Endothelial cell of umbilical vein (primary cell): ENCODE measurements at regions of chr6 and their contacts with region 1.

Region 1: DNA sequence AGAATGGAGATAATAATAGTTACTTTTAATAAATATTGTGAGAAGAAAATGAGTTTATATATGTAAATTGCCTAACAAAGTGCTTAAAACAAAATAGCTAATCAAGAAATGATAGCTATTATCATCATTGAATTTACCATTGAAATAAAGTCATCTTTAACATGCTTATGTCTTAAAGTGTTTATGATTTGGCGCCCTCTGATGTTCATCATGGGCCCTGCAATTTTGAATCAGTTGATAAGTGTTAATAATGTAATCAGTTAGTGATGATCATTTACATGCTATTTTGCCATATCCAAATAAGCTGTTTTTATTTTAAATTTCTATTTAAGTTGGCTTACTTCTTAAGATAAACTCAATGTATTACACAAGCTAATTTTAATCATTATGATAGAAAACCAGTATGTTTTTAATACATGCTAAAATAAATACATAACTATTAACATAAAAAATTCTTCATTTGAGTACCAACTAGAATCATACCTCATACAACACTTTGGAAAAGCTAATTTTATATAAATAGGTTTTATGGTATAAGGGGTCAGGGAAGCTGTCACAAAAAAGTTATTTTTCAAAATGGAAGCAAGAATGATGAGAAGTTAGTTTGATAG is 39.2 kb upstream of the TPD52L1 start:
- DNase-seq: peak; percentile 69
- H3K4me3 ChIP-seq: no peak overlapping the region
- H3K27ac ChIP-seq: no peak overlapping the region
- H3K4me1 ChIP-seq: no peaks in the 10 kb centered on the region
- H3K27me3 ChIP-seq: no peaks in the 10 kb centered on the region
- CTCF ChIP-seq: peak; percentile 49 to 50
- POLR2A ChIP-seq: no peak

Region 2: DNA sequence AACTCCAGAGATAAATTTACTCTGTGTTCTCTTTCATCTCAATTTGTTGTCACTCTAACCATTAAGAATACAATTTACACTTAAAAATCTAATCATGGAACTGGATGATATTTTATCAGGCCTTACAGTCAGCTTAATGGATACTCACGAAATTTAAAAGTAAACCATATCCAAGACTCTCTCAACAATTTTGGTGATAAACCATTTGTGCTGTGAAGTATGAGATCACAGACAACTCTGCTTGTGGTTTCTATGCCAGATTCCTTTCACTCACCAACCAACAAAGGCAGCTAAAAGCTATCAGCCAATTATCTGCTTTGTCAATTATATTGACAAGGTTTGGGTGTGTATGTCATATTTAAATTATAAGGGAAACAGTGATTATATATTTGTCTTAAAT is 1633.4 kb before region 1 on chr6:
- CTCF ChIA-PET with region 1: no interaction called
- POLR2A ChIA-PET with region 1: no interaction called
- dilution Hi-C with region 1: no loop called
- intact Hi-C with region 1: no loop called
- DNase-seq: no peak
- H3K4me3 ChIP-seq: no peak overlapping the region
- H3K27ac ChIP-seq: no peak overlapping the region
- H3K4me1 ChIP-seq: no peaks in the 10 kb centered on the region
- H3K27me3 ChIP-seq: no peaks in the 10 kb centered on the region
- CTCF ChIP-seq: no peak
- POLR2A ChIP-seq: no peak

Region 3: GRCh38 chr6:124882580-124883393 is 231.6 kb before region 1 on chr6:
- CTCF ChIA-PET with region 1: interaction called, 28 read pairs
- POLR2A ChIA-PET with region 1: no interaction called
- dilution Hi-C with region 1: no loop called
- intact Hi-C with region 1: no loop called
- DNase-seq: peak; percentile 73
- H3K4me3 ChIP-seq: peak overlapping the region in 1 of 3 experiments; percentile 6
- H3K27ac ChIP-seq: no peak overlapping the region
- H3K4me1 ChIP-seq: peaks cover 20% of the 10 kb centered on the region
- H3K27me3 ChIP-seq: no peaks in the 10 kb centered on the region
- CTCF ChIP-seq: no peak
- POLR2A ChIP-seq: no peak

Region 4: GRCh38 chr6:124888581-124889371 is 225.6 kb before region 1 on chr6:
- CTCF ChIA-PET with region 1: interaction called, 23 read pairs
- POLR2A ChIA-PET with region 1: no interaction called
- dilution Hi-C with region 1: no loop called
- intact Hi-C with region 1: no loop called
- DNase-seq: no peak
- H3K4me3 ChIP-seq: no peak overlapping the region
- H3K27ac ChIP-seq: no peak overlapping the region
- H3K4me1 ChIP-seq: no peaks in the 10 kb centered on the region
- H3K27me3 ChIP-seq: no peaks in the 10 kb centered on the region
- CTCF ChIP-seq: no peak
- POLR2A ChIP-seq: no peak

Region 5: GRCh38 chr6:124961777-124962611 is 152.4 kb before region 1 on chr6 and contains the start of gene RNF217:
- CTCF ChIA-PET with region 1: interaction called, 36 read pairs
- POLR2A ChIA-PET with region 1: no interaction called
- dilution Hi-C with region 1: no loop called
- intact Hi-C with region 1: loop called (anchors 1 kb)
- DNase-seq: peak; percentile 75
- H3K4me3 ChIP-seq: peak within 1 kb of the TSS; percentile 75 to 95 (median 93)
- H3K27ac ChIP-seq: peak within 1 kb of the TSS; percentile 69
- H3K4me1 ChIP-seq: peaks cover 40% of the 10 kb centered on the region
- H3K27me3 ChIP-seq: no peaks in the 10 kb centered on the region
- CTCF ChIP-seq: no peak
- POLR2A ChIP-seq: no peak
- total RNA-seq, gene RNF217: 32.5 and 33.1 TPM in 2 replicates

Region 6: GRCh38 chr6:124977067-124977908 is 137.1 kb before region 1 on chr6:
- CTCF ChIA-PET with region 1: interaction called, 10 read pairs
- POLR2A ChIA-PET with region 1: no interaction called
- dilution Hi-C with region 1: no loop called
- intact Hi-C with region 1: no loop called
- DNase-seq: no peak
- H3K4me3 ChIP-seq: no peak overlapping the region
- H3K27ac ChIP-seq: no peak overlapping the region
- H3K4me1 ChIP-seq: peaks cover 6% of the 10 kb centered on the region
- H3K27me3 ChIP-seq: no peaks in the 10 kb centered on the region
- CTCF ChIP-seq: no peak
- POLR2A ChIP-seq: no peak

Region 7: GRCh38 chr6:125099211-125100073 is 14.9 kb before region 1 on chr6:
- CTCF ChIA-PET with region 1: interaction called, 23 read pairs
- POLR2A ChIA-PET with region 1: no interaction called
- dilution Hi-C with region 1: no loop called
- intact Hi-C with region 1: no loop called
- DNase-seq: peak; percentile 60
- H3K4me3 ChIP-seq: peak overlapping the region; percentile 58 to 80 (median 63)
- H3K27ac ChIP-seq: peak overlapping the region; percentile 32
- H3K4me1 ChIP-seq: peaks cover 23% of the 10 kb centered on the region
- H3K27me3 ChIP-seq: no peaks in the 10 kb centered on the region
- CTCF ChIP-seq: no peak
- POLR2A ChIP-seq: no peak

Region 8: DNA sequence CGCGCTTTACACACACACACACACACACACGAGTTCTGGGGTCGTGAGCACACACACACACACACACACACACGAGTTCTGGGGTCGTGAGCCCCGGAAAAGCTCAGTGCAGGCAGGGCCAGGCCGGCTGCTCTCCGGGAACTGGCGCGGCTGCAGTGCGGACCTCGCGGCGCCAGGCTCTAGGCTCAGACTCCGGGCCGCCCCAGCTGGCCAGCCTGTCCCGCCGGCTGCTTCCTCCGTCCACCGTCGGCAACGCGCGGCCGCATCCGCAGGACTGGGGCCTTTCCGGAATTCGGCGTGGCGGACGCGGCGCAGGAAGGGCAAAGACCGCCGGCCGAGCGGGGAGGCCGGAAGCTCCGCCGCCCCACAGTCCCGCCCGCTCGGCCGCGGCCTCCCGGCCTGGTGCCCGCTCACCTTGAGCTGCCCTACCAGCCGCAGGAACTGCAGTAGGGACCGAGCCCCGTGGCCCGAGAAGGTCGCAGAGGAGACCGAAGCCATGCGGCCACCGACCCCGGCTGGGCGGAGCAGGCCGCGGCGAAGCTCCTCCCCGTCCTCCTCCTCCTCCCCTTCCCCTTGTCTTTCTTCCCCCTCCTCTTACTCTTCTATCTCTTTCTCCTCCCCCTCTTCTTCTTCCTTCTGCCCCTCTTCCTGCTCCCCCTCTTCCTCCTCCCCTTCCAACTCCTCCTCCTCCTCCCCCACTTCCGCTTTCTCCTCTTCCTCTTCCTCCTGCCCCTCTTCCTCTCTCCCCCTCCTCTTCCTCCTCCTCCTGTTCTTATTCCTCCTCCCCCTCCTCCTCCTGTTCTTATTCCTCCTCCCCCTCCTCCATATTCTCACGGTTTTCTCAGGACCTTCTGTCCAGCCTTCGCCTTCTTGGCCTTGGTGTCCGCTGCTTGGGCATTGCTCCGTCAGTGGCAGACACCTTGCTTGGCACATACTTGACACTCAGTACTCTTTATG is 187.4 kb after region 1 on chr6 and contains the start of gene HDDC2:
- CTCF ChIA-PET with region 1: interaction called, 3 read pairs
- POLR2A ChIA-PET with region 1: no interaction called
- dilution Hi-C with region 1: no loop called
- intact Hi-C with region 1: loop called (anchors 5 kb)
- DNase-seq: peak; percentile 78
- H3K4me3 ChIP-seq: peak within 1 kb of the TSS; percentile 10 to 56 (median 47)
- H3K27ac ChIP-seq: peak within 1 kb of the TSS; percentile 72
- H3K4me1 ChIP-seq: peaks cover 10% of the 10 kb centered on the region
- H3K27me3 ChIP-seq: peaks cover 8 to 12% of the 10 kb centered on the region in 2 experiments
- CTCF ChIP-seq: no peak
- POLR2A ChIP-seq: peak; percentile 49
- total RNA-seq, gene HDDC2: 12.6 and 13.6 TPM in 2 replicates

Region 9: DNA sequence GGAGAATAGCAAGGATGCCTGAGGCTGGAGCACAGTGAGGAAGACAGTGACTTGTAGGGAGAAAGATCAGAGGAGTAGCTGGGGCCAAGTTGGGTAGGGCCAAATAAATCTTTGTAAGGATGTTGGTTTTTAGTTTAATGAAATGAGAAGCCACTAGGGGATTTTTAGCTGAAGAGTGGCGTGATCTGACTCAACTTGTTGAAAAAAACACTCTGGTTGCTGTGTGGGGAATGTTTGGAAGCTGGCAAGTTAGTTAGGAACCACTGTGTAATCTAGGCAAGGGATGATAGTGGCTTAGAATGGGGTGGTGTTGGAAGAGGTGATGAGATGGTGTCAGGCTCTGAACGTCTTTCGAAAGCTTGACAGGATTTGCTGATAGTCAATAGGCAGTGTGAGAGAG is 363.5 kb after region 1 on chr6:
- CTCF ChIA-PET with region 1: no interaction called
- POLR2A ChIA-PET with region 1: no interaction called
- dilution Hi-C with region 1: no loop called
- intact Hi-C with region 1: no loop called
- DNase-seq: no peak
- H3K4me3 ChIP-seq: no peak overlapping the region
- H3K27ac ChIP-seq: no peak overlapping the region
- H3K4me1 ChIP-seq: no peaks in the 10 kb centered on the region
- H3K27me3 ChIP-seq: peaks cover 4 to 16% of the 10 kb centered on the region in 2 experiments
- CTCF ChIP-seq: no peak
- POLR2A ChIP-seq: no peak

Region 10: DNA sequence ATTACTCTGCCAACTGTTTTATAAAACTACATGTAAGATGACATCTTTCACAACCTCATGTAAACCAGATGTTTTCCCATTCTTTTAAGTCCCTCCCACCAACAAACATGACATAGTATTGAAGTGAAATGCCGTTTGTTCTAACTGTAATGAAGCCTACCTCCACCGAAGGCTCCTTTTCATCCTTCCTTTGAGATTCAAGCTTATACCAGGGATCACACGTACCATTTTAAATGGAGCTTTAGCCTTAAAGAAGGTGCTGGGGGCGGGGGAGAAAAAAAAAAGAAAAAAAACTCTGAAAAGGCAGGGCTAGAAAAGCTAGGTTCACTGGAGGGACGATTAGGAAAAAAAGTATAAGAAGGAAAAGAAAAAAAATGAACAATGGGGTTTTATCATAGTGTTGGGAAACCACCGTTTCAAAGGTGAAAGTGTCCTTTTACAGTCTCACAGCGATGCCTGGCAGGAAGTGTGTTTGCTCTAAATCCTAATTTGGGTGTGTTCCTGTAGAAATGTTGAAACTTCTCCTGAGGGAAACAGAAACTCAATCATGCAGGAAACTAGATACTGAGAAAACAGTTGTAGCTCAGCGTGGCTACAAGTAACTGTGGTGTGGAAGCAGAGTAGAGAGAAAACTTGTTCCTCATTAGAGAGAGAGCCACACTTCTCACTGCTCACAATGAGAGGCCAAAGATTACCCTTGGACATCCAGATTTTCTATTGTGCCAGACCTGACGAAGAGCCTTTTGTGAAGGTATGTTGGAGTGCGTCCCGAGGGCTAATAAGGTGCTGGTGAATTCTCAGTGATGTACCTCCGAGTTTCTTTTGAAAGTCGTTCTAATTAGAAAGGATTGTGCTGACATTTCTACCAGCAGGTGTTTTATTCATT is 804.6 kb after region 1 on chr6:
- CTCF ChIA-PET with region 1: no interaction called
- POLR2A ChIA-PET with region 1: no interaction called
- dilution Hi-C with region 1: no loop called
- intact Hi-C with region 1: no loop called
- DNase-seq: peak; percentile 91
- H3K4me3 ChIP-seq: peak overlapping the region in 1 of 3 experiments; percentile 2
- H3K27ac ChIP-seq: peak overlapping the region; percentile 21
- H3K4me1 ChIP-seq: peaks cover 18% of the 10 kb centered on the region
- H3K27me3 ChIP-seq: no peaks in the 10 kb centered on the region
- CTCF ChIP-seq: no peak
- POLR2A ChIP-seq: no peak